ENCODE measurements at regions of chr1 and their contacts with region 1.

Region 1: DNA sequence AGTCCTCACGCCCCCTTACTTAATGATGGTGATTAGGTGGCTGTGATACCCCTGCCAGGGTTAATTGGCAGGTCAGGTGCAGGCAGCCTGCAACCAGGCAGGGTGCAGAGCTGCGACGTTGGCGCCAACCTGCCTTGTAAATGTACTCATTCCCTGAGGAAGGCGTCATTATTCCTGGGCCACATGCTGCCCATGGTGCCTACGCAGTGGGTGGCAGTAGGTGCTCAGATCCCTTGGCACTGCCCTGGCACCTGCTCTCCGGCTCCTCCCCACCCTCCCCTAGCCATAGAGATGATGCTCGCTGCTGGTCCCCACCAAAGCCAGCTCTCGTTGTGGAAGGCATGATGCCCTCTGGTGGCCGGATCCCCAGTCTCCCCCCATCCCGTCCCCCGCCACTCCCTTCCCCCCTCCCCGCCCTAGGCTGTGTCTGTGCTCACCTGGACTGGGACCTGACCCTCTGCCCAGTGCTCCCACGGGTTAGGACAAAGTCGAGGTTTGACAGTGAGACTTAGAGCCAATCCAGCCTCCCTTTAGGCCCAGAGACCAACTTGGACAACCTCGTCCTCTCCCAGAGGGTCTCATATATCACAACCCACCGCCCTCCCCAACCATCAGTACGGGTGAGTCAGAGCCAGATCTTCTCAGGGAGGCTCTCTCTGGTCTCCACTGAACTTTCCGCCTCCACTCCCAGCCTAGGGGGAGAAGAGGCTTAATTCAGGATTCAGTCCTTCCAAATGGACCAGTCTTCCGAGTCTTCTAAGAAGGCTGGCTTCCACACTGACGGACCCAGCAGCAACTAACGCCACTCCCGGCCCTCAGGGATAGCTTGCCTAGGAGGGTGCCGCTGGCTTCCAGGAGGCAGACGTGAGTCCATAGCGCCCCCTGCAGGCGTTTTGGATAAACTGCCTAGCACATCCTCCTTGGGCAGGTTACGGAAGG is 5.7 kb downstream of the KRTCAP2 start:
- DNase-seq: peak; percentile 79 to 83 (median 81)
- H3K4me3 ChIP-seq: no peak overlapping the region
- H3K4me3 Mint-ChIP-seq: peak overlapping the region in 7 of 8 donors; percentile 46 to 68 (median 59)
- H3K27ac ChIP-seq: no peak overlapping the region
- H3K27ac Mint-ChIP-seq: peak overlapping the region in 5 of 7 donors; percentile 14 to 70 (median 57)
- H3K4me1 ChIP-seq: peaks cover 22% of the 10 kb centered on the region
- H3K4me1 Mint-ChIP-seq: peaks cover 14 to 28% (median 26%) of the 10 kb centered on the region in 4 donors
- H3K27me3 ChIP-seq: no peaks in the 10 kb centered on the region
- H3K27me3 Mint-ChIP-seq: no peaks in the 10 kb centered on the region

Region 2: DNA sequence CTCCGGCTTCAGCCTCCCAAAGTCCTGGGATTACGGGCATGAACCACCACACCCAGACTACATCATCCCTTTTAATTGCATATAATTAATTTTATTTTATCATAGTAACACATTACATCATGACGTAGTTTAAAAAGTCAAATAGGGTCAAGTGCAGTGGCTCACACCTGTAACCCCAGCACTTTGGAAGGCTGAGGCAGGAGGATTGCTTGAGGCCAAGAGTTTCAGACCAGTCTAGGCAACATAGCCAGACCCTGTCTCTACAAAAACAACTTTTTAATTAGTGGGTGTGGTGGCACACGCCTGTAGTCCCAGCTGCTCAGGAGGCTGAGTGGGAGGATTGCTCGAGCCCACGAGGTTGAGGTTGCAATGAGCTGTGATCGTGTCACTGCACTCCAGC is 68.1 kb before region 1 on chr1:
- CTCF ChIA-PET with region 1: interaction called, 24 read pairs
- POLR2A ChIA-PET with region 1: no interaction called
- intact Hi-C with region 1: no loop called
- DNase-seq: no peak
- H3K4me3 ChIP-seq: no peak overlapping the region
- H3K4me3 Mint-ChIP-seq: no peak overlapping the region
- H3K27ac ChIP-seq: no peak overlapping the region
- H3K27ac Mint-ChIP-seq: no peak overlapping the region
- H3K4me1 ChIP-seq: no peaks in the 10 kb centered on the region
- H3K4me1 Mint-ChIP-seq: no peaks in the 10 kb centered on the region
- H3K27me3 ChIP-seq: no peaks in the 10 kb centered on the region
- H3K27me3 Mint-ChIP-seq: peaks cover 2 to 3% of the 10 kb centered on the region in 2 donors

Region 3: DNA sequence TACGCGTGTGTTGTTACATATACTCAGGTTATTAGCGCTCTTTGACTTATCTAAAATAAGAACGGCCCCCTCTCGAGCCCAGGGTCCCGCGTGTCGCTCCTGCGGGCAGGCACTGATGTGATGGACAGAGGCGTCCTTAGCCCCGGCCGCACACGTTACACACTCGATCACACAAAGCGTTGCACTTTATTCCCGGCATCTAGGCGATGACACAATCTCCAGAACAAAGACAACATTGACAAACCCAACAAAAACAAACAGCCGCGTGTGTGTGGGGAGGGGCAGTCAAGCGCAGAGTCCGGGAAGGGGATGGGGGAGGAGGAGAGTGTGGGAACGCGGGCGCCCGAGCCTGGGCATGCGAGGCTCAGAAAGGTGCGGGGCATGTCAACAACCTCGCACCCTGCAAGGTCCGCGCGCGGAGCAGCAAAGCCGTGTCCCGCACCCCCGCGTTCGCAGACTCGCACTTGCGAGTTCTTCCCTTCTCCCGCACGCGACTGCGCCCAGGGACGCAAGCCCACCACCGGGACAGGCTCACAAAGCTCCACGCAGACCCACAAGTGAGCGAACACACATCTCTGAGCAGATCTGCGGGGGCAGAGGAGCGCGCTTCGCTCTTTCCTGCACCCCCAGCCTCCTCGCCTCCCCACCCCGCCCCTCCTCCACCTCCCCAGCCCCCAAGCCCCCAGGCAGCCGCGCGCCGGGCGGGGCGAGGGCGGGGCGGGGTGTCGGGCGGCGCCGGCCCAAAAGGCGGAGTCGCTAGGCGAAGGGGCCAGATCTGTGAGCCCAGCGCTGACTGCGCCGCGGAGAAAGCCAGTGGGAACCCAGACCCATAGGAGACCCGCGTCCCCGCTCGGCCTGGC is 40.1 kb before region 1 on chr1 and contains the start of gene EFNA1:
- CTCF ChIA-PET with region 1: no interaction called
- POLR2A ChIA-PET with region 1: no interaction called
- intact Hi-C with region 1: no loop called
- DNase-seq: peak in 4 of 5 donors; percentile 31 to 47 (median 38)
- H3K4me3 ChIP-seq: peak within 1 kb of the TSS; percentile 52 to 58
- H3K4me3 Mint-ChIP-seq: peak within 1 kb of the TSS; percentile 80 to 94 (median 89)
- H3K27ac ChIP-seq: no peak within 1 kb of the TSS
- H3K27ac Mint-ChIP-seq: peak within 1 kb of the TSS; percentile 15 to 78 (median 71)
- H3K4me1 ChIP-seq: peaks cover 32% of the 10 kb centered on the region
- H3K4me1 Mint-ChIP-seq: peaks cover 18 to 45% (median 27%) of the 10 kb centered on the region in 4 donors
- H3K27me3 ChIP-seq: peaks cover 12% of the 10 kb centered on the region
- H3K27me3 Mint-ChIP-seq: peaks cover 9 to 15% of the 10 kb centered on the region in 2 donors
- total RNA-seq, gene EFNA1: 1.2 to 1.9 TPM

Region 4: GRCh38 chr1:155504207-155504606 is 336.8 kb after region 1 on chr1:
- CTCF ChIA-PET with region 1: no interaction called
- POLR2A ChIA-PET with region 1: no interaction called
- intact Hi-C with region 1: no loop called
- DNase-seq: peak in 3 of 5 donors; percentile 23 to 31 (median 24)
- H3K4me3 ChIP-seq: no peak overlapping the region
- H3K4me3 Mint-ChIP-seq: no peak overlapping the region
- H3K27ac ChIP-seq: no peak overlapping the region
- H3K27ac Mint-ChIP-seq: peak overlapping the region in 1 of 7 donors; percentile 5
- H3K4me1 ChIP-seq: peaks cover 46% of the 10 kb centered on the region
- H3K4me1 Mint-ChIP-seq: peaks cover 27 to 46% (median 35%) of the 10 kb centered on the region in 4 donors
- H3K27me3 ChIP-seq: no peaks in the 10 kb centered on the region
- H3K27me3 Mint-ChIP-seq: no peaks in the 10 kb centered on the region